HCT116 (cell line): ENCODE measurements at regions of chr2 and their contacts with region 1.

Region 1: GRCh38 chr2:98412751-98413458 is 31.8 kb upstream of the INPP4A start:
- DNase-seq: peak; percentile 53
- ATAC-seq: peak; percentile 96
- H3K4me3 ChIP-seq: no peak overlapping the region
- H3K27ac ChIP-seq: no peak overlapping the region
- H3K4me1 ChIP-seq: peaks cover 0 to 3% of the 10 kb centered on the region in 2 experiments; a peak in 1 of 4 replicates
- H3K27me3 ChIP-seq: no peaks in the 10 kb centered on the region
- CTCF ChIP-seq: peak; percentile 70 to 76 (median 74); a peak in 5 of 6 replicates
- POLR2A ChIP-seq: no peak
- RAD21 ChIP-seq: peak; percentile 75

Region 2: DNA sequence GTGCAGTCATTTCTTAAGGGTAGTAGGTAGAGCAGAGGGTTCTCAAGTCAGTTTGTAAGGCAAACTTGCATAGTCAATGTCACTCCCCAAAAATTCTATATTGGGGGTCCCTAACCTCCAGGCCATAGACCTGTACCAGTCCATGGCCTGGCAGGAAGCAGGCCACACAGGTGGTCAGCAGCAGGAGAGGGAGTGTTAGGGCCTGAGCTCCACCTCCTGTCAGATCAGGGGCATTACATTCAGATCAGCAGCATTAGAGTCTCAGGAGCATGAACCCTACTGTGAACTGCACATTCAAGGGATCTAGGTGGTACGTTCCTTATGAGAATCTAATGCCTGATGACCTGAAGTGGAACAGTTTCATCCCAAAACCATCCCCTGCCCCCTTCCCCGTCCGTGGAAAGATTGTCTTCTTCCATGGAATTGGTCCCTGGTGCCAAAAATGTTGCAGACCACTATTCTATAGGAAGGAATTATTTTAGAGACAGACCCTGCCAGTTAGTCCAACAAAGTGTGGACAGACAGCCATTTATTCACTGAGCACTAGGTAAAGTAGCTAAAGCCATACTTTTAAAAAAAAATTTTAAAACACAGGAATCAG is 188.7 kb after region 1 on chr2:
- CTCF ChIA-PET with region 1: no interaction called
- POLR2A ChIA-PET with region 1: no interaction called
- RAD21 ChIA-PET with region 1: no interaction called
- intact Hi-C with region 1: loop called (anchors 1 kb)
- DNase-seq: peak; percentile 23
- ATAC-seq: peak; percentile 100
- H3K4me3 ChIP-seq: no peak overlapping the region
- H3K27ac ChIP-seq: no peak overlapping the region
- H3K4me1 ChIP-seq: peaks cover 0 to 2% of the 10 kb centered on the region in 2 experiments; a peak in 1 of 4 replicates
- H3K27me3 ChIP-seq: no peaks in the 10 kb centered on the region
- CTCF ChIP-seq: peak; percentile 42 to 74 (median 68); a peak in 5 of 6 replicates
- POLR2A ChIP-seq: no peak
- RAD21 ChIP-seq: peak; percentile 65